ENCODE measurements at regions of chr4 and their contacts with region 1.

Region 1: DNA sequence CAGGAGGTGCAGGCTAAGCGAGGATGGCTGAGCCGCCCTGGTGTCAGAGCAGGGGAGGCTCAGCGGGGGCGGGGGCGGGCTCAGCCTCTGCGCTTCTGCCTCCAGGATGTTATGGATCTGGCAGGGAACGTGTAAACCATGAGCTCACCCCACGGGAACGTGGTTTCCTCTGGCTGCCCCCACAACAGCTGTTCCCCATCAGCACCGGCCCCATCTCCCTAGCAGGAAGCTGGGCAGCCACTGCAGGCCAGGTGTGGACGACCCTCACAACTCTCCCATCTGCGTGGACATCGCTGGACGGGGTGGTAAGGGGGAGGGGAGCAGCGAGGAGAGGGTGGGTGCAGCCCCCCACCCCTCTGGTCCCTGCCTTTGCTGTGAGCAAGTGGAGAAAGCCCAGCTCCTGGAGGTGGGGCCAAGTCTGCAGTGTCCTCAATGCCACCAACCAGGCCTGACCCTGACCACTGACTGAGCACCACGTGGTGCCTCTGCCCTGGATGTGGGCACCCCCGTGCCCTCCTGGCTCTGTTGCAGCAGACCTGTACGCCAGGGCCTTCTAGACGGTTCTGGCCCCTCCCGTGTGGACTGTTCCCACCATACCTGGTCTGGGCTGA is 28.1 kb upstream of the SPON2 start:
- DNase-seq: peak; percentile 56
- ATAC-seq: no peak
- H3K4me3 Mint-ChIP-seq: peak overlapping the region; percentile 83
- H3K27ac Mint-ChIP-seq: peak overlapping the region; percentile 100
- H3K4me1 Mint-ChIP-seq: peaks cover 37% of the 10 kb centered on the region
- H3K27me3 Mint-ChIP-seq: no peaks in the 10 kb centered on the region

Region 2: DNA sequence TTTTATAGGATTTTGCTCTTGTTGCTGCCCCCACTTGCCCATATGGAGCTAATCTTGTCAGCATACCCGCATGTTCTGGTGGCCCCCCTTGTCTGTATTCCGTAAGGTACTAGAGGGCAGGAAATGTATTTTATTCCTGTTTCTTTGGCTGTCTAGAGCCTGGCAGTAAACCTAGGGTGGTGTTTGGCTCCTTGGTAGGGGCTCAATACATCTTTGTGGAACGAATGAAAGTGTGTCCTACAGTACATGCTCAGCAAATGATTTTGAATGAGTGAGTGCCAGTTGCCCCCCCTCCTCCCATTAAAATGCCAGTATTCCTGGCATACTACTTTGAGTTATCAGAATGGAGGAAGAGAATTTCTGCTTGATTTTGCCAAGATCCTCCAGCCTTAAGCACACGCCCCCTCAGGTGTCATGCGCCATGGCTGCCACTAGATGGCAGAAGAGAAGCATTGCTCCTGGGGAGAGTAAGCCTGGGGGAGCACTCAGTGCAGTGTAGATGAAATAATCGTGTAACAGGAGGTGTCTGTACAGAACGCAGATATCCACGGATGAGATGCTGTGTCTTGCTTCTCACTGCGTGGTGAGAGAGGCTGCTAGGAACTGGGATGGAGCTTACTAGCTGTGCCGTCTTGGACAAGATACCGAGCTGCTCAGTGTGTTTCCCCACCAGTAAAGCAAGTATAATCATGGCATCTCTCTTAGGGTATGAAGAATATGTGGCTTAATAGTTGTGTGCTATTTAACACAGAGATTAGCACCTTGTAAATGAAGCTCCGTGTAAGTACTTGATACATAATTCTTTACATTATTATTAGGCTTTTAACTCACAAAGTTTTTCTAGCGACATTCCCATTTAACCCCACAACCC is 70.0 kb before region 1 on chr4:
- POLR2A ChIA-PET with region 1: no interaction called
- DNase-seq: peak; percentile 76
- ATAC-seq: peak; percentile 98
- H3K4me3 Mint-ChIP-seq: no peak overlapping the region
- H3K27ac Mint-ChIP-seq: no peak overlapping the region
- H3K4me1 Mint-ChIP-seq: peaks cover 5% of the 10 kb centered on the region
- H3K27me3 Mint-ChIP-seq: peaks cover 12% of the 10 kb centered on the region

Region 3: GRCh38 chr4:1167247-1167949 is 33.1 kb before region 1 on chr4:
- POLR2A ChIA-PET with region 1: interaction called, 20 read pairs
- DNase-seq: peak; percentile 87
- ATAC-seq: peak; percentile 93
- H3K4me3 Mint-ChIP-seq: peak overlapping the region; percentile 84
- H3K27ac Mint-ChIP-seq: peak overlapping the region; percentile 87
- H3K4me1 Mint-ChIP-seq: peaks cover 20% of the 10 kb centered on the region
- H3K27me3 Mint-ChIP-seq: peaks cover 12% of the 10 kb centered on the region

Region 4: DNA sequence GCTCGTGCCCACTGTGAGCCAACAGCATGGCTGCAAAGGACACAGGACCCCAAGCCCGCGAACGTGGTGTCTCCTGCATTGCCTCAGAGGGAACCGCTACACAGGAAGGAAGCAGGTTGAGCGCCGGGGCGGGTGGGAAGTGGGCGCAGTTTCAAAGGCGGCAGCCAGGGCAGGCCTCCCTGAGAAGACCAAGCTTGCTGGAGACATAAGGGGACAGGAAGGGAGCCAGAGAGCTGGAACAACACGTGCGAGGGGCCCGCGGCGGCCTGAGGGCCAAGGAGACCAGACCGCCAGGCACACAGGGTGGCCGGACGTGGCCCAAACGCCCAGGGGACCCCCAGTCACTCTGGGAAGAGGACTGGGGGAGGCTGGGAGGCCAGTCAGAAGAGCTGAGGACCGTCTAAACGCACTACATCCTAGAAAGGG is 16.4 kb after region 1 on chr4:
- POLR2A ChIA-PET with region 1: interaction called, 37 read pairs
- DNase-seq: peak; percentile 79
- ATAC-seq: peak; percentile 97
- H3K4me3 Mint-ChIP-seq: peak overlapping the region; percentile 64
- H3K27ac Mint-ChIP-seq: peak overlapping the region; percentile 86
- H3K4me1 Mint-ChIP-seq: peaks cover 26% of the 10 kb centered on the region
- H3K27me3 Mint-ChIP-seq: no peaks in the 10 kb centered on the region

Measured in activated naive CD8-positive, alpha-beta T cell treated with anti-CD3 and anti-CD28 coated beads, Interleukin-2, amount 10 ng/mL, durations not matched to agents 7 days and 5 days (primary cell).